SK-N-SH (cell line): ENCODE measurements at regions of chr17 and their contacts with region 1.

Region 1: DNA sequence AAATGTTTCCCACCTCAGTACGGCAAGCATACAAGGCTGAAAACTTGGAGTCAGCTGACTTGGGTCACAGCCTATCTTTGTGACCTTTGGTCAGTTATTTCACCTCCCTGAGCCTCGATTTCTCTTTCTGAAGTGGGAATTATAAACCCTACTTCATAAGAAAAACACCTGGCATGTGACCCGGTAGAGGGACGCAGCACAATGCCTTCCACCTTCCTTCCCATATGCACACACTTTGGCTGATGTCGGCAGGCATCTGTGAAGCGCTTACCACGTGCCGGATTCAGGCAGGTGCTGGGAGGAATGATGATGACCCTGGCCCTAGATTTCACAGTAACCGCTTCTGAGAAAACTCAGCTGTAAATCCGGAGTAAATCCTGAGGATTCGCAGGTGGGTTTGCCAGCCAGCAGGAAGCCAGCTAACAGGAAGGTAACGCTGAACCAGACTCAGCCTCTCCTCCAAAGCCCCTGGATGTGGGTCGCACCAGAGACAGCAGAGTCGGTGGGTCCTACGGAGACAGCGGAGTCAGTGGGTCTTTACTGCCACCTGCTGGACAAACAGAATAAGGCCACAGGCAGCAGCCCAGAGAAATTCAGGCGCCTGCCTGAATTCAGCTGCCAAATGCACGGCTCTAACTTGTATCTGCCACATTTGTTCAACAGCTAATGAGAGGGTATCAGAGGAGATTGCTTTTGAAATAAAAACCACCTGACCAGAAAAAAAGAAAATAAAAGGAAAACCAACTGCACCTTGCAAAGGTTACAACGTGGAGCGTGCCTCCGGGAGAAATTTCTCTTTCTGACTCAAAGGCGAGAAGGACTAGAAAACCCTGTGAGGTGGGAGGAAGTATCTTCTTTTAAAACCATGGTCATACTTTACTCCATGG is 16.6 kb downstream of the COPRS start:
- DNase-seq: peak; percentile 85
- H3K4me3 ChIP-seq: no peak overlapping the region; a peak in 1 of 4 replicates
- H3K27ac ChIP-seq: peak overlapping the region; percentile 28 to 53; a peak in 3 of 4 replicates
- H3K4me1 ChIP-seq: peaks cover 4 to 11% of the 10 kb centered on the region in 2 experiments; a peak in 2 of 4 replicates
- H3K27me3 ChIP-seq: no peaks in the 10 kb centered on the region
- CTCF ChIP-seq: peak; percentile 97
- EP300 ChIP-seq: no peak
- RAD21 ChIP-seq: peak; percentile 98

Region 2: GRCh38 chr17:31437720-31438420 is 404.6 kb before region 1 on chr17:
- CTCF ChIA-PET with region 1: interaction called, 13 read pairs
- POLR2A ChIA-PET with region 1: no interaction called
- DNase-seq: no peak
- H3K4me3 ChIP-seq: no peak overlapping the region
- H3K27ac ChIP-seq: no peak overlapping the region
- H3K4me1 ChIP-seq: no peaks in the 10 kb centered on the region; a peak in 1 of 4 replicates
- H3K27me3 ChIP-seq: no peaks in the 10 kb centered on the region
- CTCF ChIP-seq: no peak
- EP300 ChIP-seq: no peak
- RAD21 ChIP-seq: no peak

Region 3: GRCh38 chr17:31544186-31544585 is 298.2 kb before region 1 on chr17:
- CTCF ChIA-PET with region 1: interaction called, 28 read pairs
- POLR2A ChIA-PET with region 1: no interaction called
- DNase-seq: no peak
- H3K4me3 ChIP-seq: no peak overlapping the region
- H3K27ac ChIP-seq: no peak overlapping the region
- H3K4me1 ChIP-seq: peaks cover 0 to 10% of the 10 kb centered on the region in 2 experiments; a peak in 1 of 4 replicates
- H3K27me3 ChIP-seq: no peaks in the 10 kb centered on the region
- CTCF ChIP-seq: no peak
- EP300 ChIP-seq: no peak
- RAD21 ChIP-seq: no peak

Region 4: DNA sequence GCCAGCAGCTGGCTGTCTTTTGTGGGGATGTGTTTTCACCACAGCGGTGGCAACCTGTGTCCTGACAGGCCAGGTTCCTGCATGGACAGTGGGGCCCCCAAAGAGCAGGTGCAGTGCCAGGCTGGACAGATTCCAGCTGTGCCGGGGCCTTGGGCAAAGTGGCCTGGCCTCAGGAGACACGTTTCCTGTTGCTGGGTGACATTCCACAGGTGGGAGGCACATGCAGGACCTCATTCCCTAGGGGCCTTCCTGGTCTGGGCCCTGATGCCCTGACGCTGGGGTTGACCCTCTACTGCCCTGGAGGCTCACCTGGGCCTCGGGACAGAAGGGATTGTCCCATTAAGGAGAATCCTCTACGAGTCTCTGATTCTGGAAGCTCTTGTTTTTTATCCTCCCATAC is 268.6 kb before region 1 on chr17:
- CTCF ChIA-PET with region 1: interaction called, 22 read pairs
- POLR2A ChIA-PET with region 1: no interaction called
- DNase-seq: peak; percentile 16
- H3K4me3 ChIP-seq: no peak overlapping the region
- H3K27ac ChIP-seq: no peak overlapping the region
- H3K4me1 ChIP-seq: peaks cover 17 to 42% of the 10 kb centered on the region in 2 experiments
- H3K27me3 ChIP-seq: no peaks in the 10 kb centered on the region
- CTCF ChIP-seq: no peak
- EP300 ChIP-seq: no peak
- RAD21 ChIP-seq: no peak

Region 5: GRCh38 chr17:31650756-31651520 is 191.5 kb before region 1 on chr17:
- CTCF ChIA-PET with region 1: interaction called, 11 read pairs
- POLR2A ChIA-PET with region 1: no interaction called
- DNase-seq: no peak
- H3K4me3 ChIP-seq: no peak overlapping the region
- H3K27ac ChIP-seq: no peak overlapping the region
- H3K4me1 ChIP-seq: no peaks in the 10 kb centered on the region
- H3K27me3 ChIP-seq: no peaks in the 10 kb centered on the region
- CTCF ChIP-seq: no peak
- EP300 ChIP-seq: no peak
- RAD21 ChIP-seq: no peak

Region 6: DNA sequence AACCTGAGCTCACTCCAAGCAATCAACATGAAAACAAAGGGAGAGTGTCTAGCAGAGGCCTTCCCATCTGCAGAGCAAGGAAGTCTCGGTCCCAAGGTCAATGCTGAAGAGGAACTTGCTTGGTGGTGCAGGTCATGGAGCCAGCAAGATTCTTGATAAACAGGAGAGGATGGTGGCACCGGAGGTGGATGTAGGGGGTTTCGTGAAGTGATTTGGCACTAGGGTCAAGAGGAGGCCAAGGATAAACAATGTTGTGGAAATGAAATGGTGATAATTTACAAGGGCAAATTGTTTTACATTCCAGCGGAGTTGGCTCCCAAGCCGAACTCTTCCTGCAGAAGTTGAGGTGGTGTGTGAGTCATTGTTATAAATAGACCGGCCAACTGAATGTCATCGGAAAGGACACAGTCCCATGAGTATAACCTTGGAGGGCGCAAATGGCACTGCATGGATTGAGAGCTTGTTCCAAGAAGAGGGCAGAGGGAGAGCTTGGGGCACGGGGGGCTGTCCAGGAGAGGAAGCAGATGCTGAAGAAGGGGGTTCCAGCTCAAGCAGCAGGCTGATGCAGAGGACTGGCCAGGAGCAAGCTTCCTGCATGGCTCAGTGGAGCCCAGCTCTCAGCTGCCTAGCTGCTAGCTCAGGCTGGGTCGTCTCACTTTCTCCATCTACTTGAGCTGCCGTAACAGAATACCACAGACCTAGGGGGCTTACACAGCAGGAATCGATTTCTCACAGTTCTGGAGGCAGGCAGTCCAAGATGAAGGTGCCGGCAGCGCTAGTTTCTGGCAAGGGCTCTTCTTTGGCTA is 120.0 kb before region 1 on chr17:
- CTCF ChIA-PET with region 1: no interaction called
- POLR2A ChIA-PET with region 1: no interaction called
- DNase-seq: no peak
- H3K4me3 ChIP-seq: no peak overlapping the region
- H3K27ac ChIP-seq: peak overlapping the region; percentile 65 to 71
- H3K4me1 ChIP-seq: peaks cover 0 to 25% of the 10 kb centered on the region in 2 experiments; a peak in 3 of 4 replicates
- H3K27me3 ChIP-seq: no peaks in the 10 kb centered on the region
- CTCF ChIP-seq: no peak
- EP300 ChIP-seq: peak in 1 of 2 experiments; percentile 72; a peak in 2 of 4 replicates
- RAD21 ChIP-seq: no peak

Region 7: GRCh38 chr17:31858642-31859473 is 16.4 kb after region 1 on chr17 and contains the start of gene COPRS:
- CTCF ChIA-PET with region 1: interaction called, 24 read pairs
- POLR2A ChIA-PET with region 1: no interaction called
- DNase-seq: peak; percentile 99
- H3K4me3 ChIP-seq: peak within 1 kb of the TSS; percentile 59 to 76
- H3K27ac ChIP-seq: peak within 1 kb of the TSS; percentile 38 to 48; a peak in 2 of 4 replicates
- H3K4me1 ChIP-seq: peaks cover 0 to 13% of the 10 kb centered on the region in 2 experiments; a peak in 2 of 4 replicates
- H3K27me3 ChIP-seq: no peaks in the 10 kb centered on the region
- CTCF ChIP-seq: peak; percentile 25
- EP300 ChIP-seq: no peak
- RAD21 ChIP-seq: peak; percentile 23; the same call in 1 of the 2 replicates
- polyA plus RNA-seq, gene COPRS: 76.4 and 88.8 TPM in 2 replicates